Aorta (tissue), 5 donors: ENCODE measurements at regions of chr3 and their contacts with region 1.

Region 1: DNA sequence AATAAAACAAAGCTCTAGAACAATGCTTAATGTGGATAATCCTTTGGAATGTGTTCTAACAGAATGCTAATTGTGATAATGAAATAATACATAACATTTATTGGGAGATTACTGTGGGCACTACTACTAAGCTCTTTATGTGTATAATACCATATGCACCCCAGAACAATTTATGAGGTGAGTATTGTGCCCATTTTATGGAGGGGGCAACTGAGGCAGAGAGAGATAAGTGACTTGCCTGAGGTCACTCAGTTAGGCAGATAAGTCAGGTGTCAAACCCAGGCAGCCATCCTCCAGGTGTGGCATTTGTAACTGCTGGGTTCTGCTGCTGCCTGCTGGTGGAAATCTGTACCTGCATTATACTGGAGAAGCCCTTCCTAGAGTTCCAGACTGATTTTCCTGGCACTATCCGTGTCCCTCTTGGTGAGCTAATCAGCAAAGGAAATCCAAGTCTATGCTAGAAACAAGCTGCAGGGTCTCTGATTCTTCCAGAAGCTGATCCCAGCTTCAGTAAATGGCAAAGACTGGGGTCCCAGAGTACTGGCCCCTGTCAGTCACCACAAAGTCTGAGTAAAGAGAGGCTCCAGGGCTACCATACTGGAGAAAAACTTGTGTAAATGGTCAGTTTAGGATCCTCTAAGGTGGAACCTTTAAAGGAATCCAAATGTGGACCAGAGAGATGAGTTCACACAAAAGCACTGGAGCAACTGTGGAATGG is 22.6 kb upstream of the RBP1 start:
- DNase-seq: no peak
- ATAC-seq: peak; percentile 87
- H3K4me3 ChIP-seq: no peak overlapping the region
- H3K27ac ChIP-seq: no peak overlapping the region
- H3K4me1 ChIP-seq: no peaks in the 10 kb centered on the region
- H3K27me3 ChIP-seq: no peaks in the 10 kb centered on the region

Region 2: GRCh38 chr3:139329345-139329850 is 232.7 kb before region 1 on chr3:
- intact Hi-C with region 1: no loop called
- DNase-seq: peak; percentile 90 to 96
- ATAC-seq: peak; percentile 91
- H3K4me3 ChIP-seq: no peak overlapping the region
- H3K27ac ChIP-seq: no peak overlapping the region
- H3K4me1 ChIP-seq: no peaks in the 10 kb centered on the region
- H3K27me3 ChIP-seq: no peaks in the 10 kb centered on the region

Region 3: DNA sequence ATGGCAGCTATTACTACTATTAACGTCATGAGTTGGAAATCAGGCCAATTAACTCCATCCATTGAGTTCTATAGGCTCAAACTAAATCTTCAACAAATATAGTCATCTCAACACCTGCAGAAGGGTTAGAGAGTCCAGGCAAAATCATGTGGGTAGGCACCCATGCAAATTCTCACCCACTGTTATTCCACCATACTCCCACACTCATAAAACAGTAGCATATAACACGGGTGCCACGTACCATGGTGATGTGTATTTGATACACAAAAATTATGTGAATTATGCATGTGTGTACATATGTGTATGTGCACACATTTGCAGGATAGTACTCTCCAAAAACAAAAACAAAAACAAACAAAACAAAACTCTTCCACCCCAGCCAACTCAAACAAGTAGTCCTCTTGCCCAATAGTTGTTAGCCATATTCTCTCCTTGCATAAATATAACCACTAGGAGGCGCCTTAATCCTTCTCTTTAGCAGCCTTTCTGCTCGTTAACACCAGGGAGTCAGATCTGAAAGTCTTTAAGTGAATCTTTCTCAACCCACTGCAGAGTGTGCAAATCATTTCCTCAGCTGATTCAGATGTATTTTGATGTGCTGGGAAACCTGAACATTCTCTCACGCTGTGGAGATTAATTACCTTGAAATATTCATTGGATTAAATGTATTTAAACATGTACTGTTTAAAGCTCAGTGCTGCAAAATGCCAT is 134.7 kb before region 1 on chr3:
- intact Hi-C with region 1: loop called (anchors 2 kb)
- DNase-seq: no peak
- ATAC-seq: peak; percentile 86
- H3K4me3 ChIP-seq: no peak overlapping the region
- H3K27ac ChIP-seq: no peak overlapping the region
- H3K4me1 ChIP-seq: no peaks in the 10 kb centered on the region
- H3K27me3 ChIP-seq: no peaks in the 10 kb centered on the region

Region 4: DNA sequence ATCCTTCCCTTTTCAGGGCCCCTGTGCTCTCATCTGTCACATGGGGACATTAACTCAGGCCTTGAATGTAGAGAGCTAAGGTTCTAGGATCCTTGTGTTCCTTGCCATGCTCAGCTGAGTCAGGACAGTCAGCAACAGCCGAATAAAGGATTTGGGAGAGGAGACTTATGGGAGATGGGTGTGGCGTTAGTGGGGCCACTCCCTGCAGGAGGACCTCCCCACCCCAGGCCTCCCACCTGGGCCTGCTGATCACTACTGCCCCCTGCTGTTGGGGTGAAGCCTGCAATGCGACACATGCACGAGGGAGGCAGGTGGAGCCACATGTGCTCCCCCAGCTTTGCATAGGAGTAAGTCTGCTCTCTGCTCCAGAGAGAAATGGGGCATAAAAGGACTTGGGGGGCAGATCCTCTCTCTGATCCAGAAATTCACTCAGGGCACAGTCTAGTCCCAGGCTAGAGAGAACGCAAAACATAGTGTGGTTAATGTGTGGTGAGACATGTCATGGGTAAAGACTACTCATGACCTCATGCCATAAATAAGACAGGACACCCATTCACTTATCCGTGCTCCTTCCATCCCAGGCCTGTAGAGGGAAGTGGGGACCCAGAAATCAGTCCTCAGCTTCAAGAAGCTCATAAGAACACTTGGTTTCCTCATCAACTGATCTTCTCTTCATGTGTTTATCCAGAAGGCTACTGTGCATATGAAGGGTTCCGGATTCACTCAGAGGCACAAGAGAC is 42.0 kb before region 1 on chr3:
- intact Hi-C with region 1: loop called in 1 of 2 experiments (anchors 5 kb)
- DNase-seq: no peak
- ATAC-seq: no peak
- H3K4me3 ChIP-seq: no peak overlapping the region
- H3K27ac ChIP-seq: no peak overlapping the region
- H3K4me1 ChIP-seq: no peaks in the 10 kb centered on the region
- H3K27me3 ChIP-seq: no peaks in the 10 kb centered on the region